ENCODE measurements at regions of chr1 and their contacts with region 1.

Region 1: DNA sequence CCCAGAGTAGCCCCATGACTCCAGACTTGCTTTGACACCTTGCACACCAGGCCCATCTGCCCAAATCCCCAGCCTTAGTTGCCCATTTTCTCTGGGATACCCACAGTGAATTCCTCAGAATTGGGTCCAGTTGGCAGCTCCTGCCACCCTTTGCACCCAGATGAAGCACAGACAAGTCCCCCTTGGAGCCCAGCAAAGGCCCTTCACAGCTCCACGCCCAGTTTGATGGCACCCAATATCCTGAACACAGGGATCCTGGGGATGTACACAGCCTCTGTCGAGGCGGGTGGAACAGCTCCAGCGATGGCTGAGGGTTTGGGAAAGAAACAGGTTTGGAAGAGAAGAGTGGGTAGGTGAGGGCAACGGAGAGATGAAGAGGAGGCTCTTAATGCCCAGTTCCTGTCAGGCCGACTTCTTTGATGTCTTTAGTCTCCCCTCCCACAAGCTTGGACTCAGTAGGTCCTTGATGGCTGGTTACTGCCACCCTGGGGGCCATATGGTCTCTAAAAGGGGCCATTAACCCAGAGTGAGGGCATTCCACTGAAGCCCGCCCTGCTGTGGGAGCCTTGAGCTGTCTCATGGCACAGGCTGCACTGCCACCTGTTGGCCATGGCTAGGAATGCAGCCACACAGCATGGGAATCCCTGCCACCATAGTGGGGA is 21.7 kb downstream of the TMEM53 start:
- DNase-seq: peak; percentile 85
- ATAC-seq: peak; percentile 83

Region 2: GRCh38 chr1:43844114-43844513 is 808.5 kb before region 1 on chr1:
- intact Hi-C with region 1: no loop called
- DNase-seq: no peak
- ATAC-seq: no peak

Region 3: GRCh38 chr1:44609412-44609767 is 43.2 kb before region 1 on chr1:
- intact Hi-C with region 1: loop called (anchors 2 kb)
- DNase-seq: peak; percentile 74
- ATAC-seq: peak; percentile 86

Region 4: GRCh38 chr1:44694863-44695478 is 42.4 kb after region 1 on chr1:
- intact Hi-C with region 1: no loop called
- DNase-seq: no peak
- ATAC-seq: no peak